ENCODE measurements at regions of chr4 and their contacts with region 1.

Region 1: GRCh38 chr4:169446824-169447223 is 165.6 kb downstream of the NEK1 start:
- DNase-seq: no peak

Region 2: GRCh38 chr4:169369634-169370033 is 77.2 kb before region 1 on chr4:
- intact Hi-C with region 1: no loop called
- DNase-seq: no peak

Region 3: GRCh38 chr4:169464080-169464479 is 17.3 kb after region 1 on chr4:
- intact Hi-C with region 1: loop called in 1 of 2 experiments (anchors 1 kb)
- DNase-seq: no peak